ENCODE measurements at regions of chr12 and their contacts with region 1.

Region 1: DNA sequence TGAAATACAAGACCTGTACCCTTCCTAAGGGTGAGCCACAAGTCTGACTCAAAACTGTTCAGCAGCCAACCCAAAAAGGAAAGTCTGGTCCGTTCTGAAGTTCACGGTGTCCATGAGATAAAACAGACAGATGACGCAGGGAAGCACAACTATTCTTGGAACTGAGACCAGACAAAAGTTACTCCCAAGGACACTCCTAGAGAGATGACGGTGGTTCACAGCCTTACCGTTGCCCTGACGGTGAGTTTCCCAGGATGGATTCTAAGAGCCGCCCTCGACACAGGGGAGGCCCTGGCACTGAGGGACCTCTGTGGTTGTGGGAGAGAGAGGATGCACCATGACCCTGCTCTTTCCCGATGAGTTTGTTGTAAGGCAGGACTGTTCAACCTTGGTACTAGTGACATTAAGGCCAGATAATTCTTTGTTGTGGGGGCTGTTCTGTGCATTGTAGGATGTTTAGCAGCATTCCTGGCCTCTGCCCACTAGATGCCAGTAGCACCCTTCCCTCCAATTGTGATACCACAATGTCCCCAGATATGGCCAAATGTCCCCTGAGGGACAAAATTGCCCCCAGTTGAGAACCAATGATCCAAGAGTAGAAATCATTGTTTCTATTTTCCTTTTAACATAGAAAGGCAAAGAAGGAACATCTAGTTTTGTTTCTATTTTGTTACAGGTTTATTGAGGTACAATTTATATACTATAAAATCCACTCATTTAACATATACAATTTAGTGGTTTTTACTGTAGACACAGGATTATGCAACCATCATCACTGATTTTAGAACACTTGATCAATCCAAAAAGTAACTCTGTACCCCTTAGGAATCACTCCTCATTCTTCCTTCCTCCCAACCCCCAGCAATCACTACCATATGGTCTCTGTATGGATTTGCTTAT is 23.0 kb downstream of the OR10P1 start:
- DNase-seq: no peak
- H3K4me3 Mint-ChIP-seq: no peak overlapping the region
- H3K27ac Mint-ChIP-seq: no peak overlapping the region
- H3K4me1 Mint-ChIP-seq: no peaks in the 10 kb centered on the region
- H3K27me3 Mint-ChIP-seq: peaks cover 25% of the 10 kb centered on the region

Region 2: GRCh38 chr12:55572168-55572567 is 87.6 kb before region 1 on chr12 and contains the start of gene OR2AP1:
- CTCF ChIA-PET with region 1: no interaction called
- POLR2A ChIA-PET with region 1: no interaction called
- DNase-seq: no peak
- H3K4me3 Mint-ChIP-seq: no peak within 1 kb of the TSS
- H3K27ac Mint-ChIP-seq: no peak within 1 kb of the TSS
- H3K4me1 Mint-ChIP-seq: no peaks in the 10 kb centered on the region
- H3K27me3 Mint-ChIP-seq: no peaks in the 10 kb centered on the region
- total RNA-seq, gene OR2AP1: not detected

Region 3: DNA sequence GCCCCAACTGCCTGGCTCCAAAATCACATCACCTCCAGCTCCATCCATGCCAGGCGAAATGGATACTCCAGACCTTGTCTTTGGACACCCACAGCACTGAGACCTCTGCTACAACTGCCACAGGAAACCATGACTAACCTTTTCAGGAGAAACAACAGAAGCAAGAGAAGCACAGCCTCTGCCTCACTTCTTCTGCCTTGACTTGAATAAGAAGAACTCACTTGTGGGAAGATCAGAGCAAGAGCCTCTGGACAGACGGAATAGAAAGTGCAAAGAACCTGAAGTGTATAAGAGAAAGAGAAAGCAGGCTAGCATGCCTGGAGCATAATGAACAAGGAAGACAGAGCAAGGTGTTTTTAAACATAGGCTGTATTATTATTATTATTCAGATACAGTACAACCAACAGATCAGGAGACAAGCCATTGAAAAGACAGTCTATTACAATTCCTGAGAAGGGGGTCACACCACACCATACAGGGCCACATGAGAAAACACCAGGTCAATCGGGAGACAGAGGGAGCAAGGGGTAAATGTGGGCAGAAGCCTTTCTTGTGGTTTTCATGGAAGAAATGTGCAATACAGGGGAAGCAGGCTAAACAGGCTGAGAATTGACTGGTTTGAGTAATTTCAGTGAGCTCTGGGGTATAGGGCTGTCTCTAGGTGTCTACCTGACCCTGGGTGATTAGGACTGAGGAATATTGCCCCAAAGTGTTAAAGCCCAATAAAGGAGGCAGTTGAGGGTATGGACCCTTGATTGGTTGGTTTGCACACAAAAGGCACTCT is 30.5 kb before region 1 on chr12:
- CTCF ChIA-PET with region 1: interaction called, 10 read pairs
- POLR2A ChIA-PET with region 1: no interaction called
- DNase-seq: no peak
- H3K4me3 Mint-ChIP-seq: no peak overlapping the region
- H3K27ac Mint-ChIP-seq: peak overlapping the region; percentile 5
- H3K4me1 Mint-ChIP-seq: peaks cover 21% of the 10 kb centered on the region
- H3K27me3 Mint-ChIP-seq: peaks cover 4% of the 10 kb centered on the region

Region 4: GRCh38 chr12:55647027-55647426 is 12.7 kb before region 1 on chr12:
- CTCF ChIA-PET with region 1: interaction called, 72 read pairs
- POLR2A ChIA-PET with region 1: interaction called, 3 read pairs
- DNase-seq: no peak
- H3K4me3 Mint-ChIP-seq: no peak overlapping the region
- H3K27ac Mint-ChIP-seq: peak overlapping the region; percentile 21
- H3K4me1 Mint-ChIP-seq: peaks cover 26% of the 10 kb centered on the region
- H3K27me3 Mint-ChIP-seq: no peaks in the 10 kb centered on the region

Region 5: DNA sequence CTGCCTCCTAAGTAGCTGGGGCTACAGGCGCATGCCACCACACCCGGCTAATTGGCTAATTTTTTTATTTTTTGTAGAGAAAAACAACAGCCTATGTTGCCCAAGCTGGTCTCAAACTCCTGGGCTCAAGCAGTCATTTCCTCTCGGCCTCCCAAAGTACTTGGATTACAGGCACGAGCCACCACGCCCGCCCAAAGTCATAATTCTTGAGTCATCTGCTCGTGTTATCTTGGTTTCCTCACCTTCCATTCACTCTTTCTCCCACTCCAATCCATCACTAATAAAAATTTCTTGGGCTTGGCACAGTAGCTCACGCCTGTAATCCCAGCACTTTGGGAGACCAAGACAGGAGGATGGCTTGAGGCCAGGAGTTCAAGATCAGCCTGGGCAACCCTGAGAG is 15.9 kb after region 1 on chr12:
- CTCF ChIA-PET with region 1: interaction called, 10 read pairs
- POLR2A ChIA-PET with region 1: no interaction called
- DNase-seq: no peak
- H3K4me3 Mint-ChIP-seq: no peak overlapping the region
- H3K27ac Mint-ChIP-seq: no peak overlapping the region
- H3K4me1 Mint-ChIP-seq: no peaks in the 10 kb centered on the region
- H3K27me3 Mint-ChIP-seq: peaks cover 28% of the 10 kb centered on the region